ENCODE measurements at regions of chr4 and their contacts with region 1.

Region 1: GRCh38 chr4:8340781-8341241 is 71.3 kb downstream of the HTRA3 start:
- DNase-seq: no peak
- H3K4me3 ChIP-seq: no peak overlapping the region
- H3K27ac ChIP-seq: no peak overlapping the region
- H3K4me1 ChIP-seq: peaks cover 0 to 4% (median 2%) of the 10 kb centered on the region in 4 experiments; a peak in 3 of 7 replicates
- H3K27me3 ChIP-seq: no peaks in the 10 kb centered on the region
- CTCF ChIP-seq: no peak
- EP300 ChIP-seq: no peak
- POLR2A ChIP-seq: no peak
- RAD21 ChIP-seq: no peak

Region 2: DNA sequence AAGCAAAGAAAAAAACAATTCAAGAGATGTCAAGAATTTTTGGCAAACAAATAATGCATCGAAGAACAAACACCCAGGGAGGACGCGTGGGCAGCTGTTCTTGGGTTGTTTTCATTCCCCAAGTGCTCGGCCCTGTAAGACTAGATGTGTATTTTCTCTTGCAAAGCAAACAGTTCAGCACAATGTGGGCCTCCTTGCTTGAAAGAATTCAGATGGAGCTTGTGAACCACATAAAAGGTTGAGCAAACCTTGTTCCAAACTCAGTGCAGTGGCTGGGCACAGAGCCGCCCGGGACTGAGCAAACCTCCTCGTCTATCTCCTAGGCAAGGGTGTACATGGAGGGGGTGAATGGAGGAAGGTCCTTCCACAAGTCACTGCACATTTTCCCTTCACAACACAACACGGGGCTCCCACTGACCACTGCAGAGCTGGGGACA is 11.1 kb after region 1 on chr4:
- CTCF ChIA-PET with region 1: interaction called, 21 read pairs
- POLR2A ChIA-PET with region 1: no interaction called
- DNase-seq: no peak
- H3K4me3 ChIP-seq: no peak overlapping the region
- H3K27ac ChIP-seq: no peak overlapping the region
- H3K4me1 ChIP-seq: peaks cover 6 to 17% (median 11%) of the 10 kb centered on the region in 4 experiments
- H3K27me3 ChIP-seq: peaks cover 0 to 16% (median 1%) of the 10 kb centered on the region in 4 experiments; a peak in 4 of 7 replicates
- CTCF ChIP-seq: no peak
- EP300 ChIP-seq: no peak
- POLR2A ChIP-seq: no peak
- RAD21 ChIP-seq: no peak

Region 3: DNA sequence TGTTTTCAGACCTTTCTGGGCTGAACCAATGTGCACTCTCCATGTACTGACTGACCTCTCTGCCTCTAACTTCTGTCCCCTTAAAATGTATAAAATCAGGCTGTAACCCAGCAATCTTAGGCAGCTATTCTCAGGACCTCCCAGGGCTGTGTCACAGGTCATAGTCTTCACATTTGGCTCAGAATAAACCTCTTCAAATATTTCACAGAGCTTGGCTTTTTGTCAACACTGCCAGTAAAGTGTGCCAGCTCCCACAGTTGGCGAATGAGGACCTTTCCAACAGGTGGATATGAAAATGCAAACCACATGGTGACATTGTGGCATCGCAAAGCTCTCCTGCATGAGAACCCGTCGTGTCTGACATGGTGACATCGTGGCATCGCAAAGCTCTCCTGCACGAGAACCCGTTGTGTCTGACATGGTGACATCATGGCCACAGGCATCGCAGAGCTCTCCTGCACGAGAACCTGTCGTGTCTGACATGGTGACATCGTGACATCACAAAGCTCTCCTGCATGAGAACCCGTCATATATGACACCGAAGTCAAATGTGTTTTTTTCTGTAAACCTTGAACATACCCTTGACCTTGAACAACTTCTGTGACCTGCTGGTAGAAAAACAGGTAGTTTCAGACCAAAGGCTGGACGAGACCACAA is 23.5 kb after region 1 on chr4:
- CTCF ChIA-PET with region 1: interaction called, 15 read pairs
- POLR2A ChIA-PET with region 1: no interaction called
- DNase-seq: no peak
- H3K4me3 ChIP-seq: no peak overlapping the region
- H3K27ac ChIP-seq: no peak overlapping the region
- H3K4me1 ChIP-seq: peaks cover 0 to 3% (median 0%) of the 10 kb centered on the region in 4 experiments; a peak in 2 of 7 replicates
- H3K27me3 ChIP-seq: peaks cover 0 to 6% (median under 1%) of the 10 kb centered on the region in 4 experiments; a peak in 4 of 7 replicates
- CTCF ChIP-seq: no peak
- EP300 ChIP-seq: no peak
- POLR2A ChIP-seq: no peak
- RAD21 ChIP-seq: no peak

Region 4: GRCh38 chr4:8376361-8376760 is 35.5 kb after region 1 on chr4:
- CTCF ChIA-PET with region 1: interaction called, 14 read pairs
- POLR2A ChIA-PET with region 1: no interaction called
- DNase-seq: no peak
- H3K4me3 ChIP-seq: no peak overlapping the region
- H3K27ac ChIP-seq: no peak overlapping the region
- H3K4me1 ChIP-seq: peaks cover 0 to 5% (median 2%) of the 10 kb centered on the region in 4 experiments; a peak in 3 of 7 replicates
- H3K27me3 ChIP-seq: no peaks in the 10 kb centered on the region
- CTCF ChIP-seq: no peak
- EP300 ChIP-seq: no peak
- POLR2A ChIP-seq: no peak
- RAD21 ChIP-seq: no peak

Region 5: GRCh38 chr4:8410641-8411271 is 69.9 kb after region 1 on chr4:
- CTCF ChIA-PET with region 1: interaction called, 10 read pairs
- POLR2A ChIA-PET with region 1: no interaction called
- DNase-seq: peak; percentile 53 to 85
- H3K4me3 ChIP-seq: no peak overlapping the region
- H3K27ac ChIP-seq: no peak overlapping the region
- H3K4me1 ChIP-seq: peaks cover 0 to 5% (median 4%) of the 10 kb centered on the region in 4 experiments; a peak in 6 of 7 replicates
- H3K27me3 ChIP-seq: no peaks in the 10 kb centered on the region
- CTCF ChIP-seq: peak in 2 of 3 experiments; percentile 62 to 73; a peak in 3 of 4 replicates
- EP300 ChIP-seq: no peak
- POLR2A ChIP-seq: no peak
- RAD21 ChIP-seq: peak; percentile 64 to 74

Region 6: DNA sequence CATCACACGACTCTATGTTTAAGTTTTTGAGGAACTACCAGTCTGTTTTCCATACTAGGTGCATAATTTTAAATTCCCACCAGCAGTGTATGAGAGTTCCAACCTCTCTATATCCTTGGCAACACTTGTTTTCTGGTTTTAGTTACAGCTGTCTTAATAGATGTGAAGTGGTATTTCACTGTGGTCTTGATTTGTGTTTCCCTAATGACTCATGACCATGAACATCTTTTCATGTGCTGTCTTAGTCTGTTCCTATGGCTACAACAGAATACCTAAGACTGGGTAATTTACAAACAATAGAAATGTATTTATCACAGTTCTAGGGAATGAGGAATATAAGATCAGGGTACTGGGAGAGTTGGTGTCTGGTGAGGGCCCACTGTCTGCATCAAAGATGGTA is 187.9 kb after region 1 on chr4:
- CTCF ChIA-PET with region 1: no interaction called
- POLR2A ChIA-PET with region 1: no interaction called
- DNase-seq: no peak
- H3K4me3 ChIP-seq: no peak overlapping the region
- H3K27ac ChIP-seq: no peak overlapping the region
- H3K4me1 ChIP-seq: peaks cover under 1 to 11% (median 9%) of the 10 kb centered on the region in 4 experiments
- H3K27me3 ChIP-seq: peaks cover 0 to 2% (median 0%) of the 10 kb centered on the region in 4 experiments; a peak in 1 of 7 replicates
- CTCF ChIP-seq: no peak
- EP300 ChIP-seq: no peak
- POLR2A ChIP-seq: no peak
- RAD21 ChIP-seq: no peak

Region 7: DNA sequence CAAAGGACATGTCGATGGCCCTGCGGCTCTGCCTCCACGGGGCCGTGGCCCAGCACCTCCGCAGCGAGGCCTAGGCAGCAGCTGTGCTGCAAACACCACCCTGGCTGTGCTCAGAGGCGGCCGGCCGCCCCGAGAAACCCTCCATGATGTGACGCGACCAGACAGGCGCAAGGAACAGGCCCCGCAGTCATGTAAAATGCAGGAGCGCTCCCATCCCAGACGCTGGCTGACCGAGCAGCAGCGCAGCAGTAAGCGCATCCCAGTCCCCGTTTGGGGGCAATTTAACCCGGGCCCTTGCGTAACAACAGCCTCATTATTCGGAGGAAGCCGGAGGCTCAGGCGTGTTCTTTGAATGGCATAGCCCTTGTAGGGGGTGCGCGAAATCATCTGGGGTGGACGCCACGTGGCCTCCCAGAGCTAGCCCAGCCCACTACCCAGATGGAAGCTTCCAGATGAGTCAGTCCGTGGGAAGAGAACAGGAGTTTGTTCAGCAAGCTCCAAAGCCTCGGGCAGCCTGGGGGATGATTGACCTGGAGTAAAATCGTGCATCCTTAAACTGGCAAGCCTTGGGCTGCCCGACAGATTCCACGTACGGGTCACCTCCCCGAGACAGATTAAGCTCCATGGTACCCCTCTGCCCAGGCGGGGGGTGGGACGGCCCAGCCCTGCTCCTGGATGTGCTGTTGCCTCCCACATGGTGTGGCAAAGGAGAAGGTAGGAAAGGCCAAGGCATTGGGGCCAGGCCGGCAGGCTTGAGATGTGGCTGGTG is 406.8 kb after region 1 on chr4:
- CTCF ChIA-PET with region 1: no interaction called
- POLR2A ChIA-PET with region 1: no interaction called
- DNase-seq: peak in 1 of 2 experiments; percentile 49
- H3K4me3 ChIP-seq: no peak overlapping the region
- H3K27ac ChIP-seq: no peak overlapping the region
- H3K4me1 ChIP-seq: no peaks in the 10 kb centered on the region; a peak in 1 of 7 replicates
- H3K27me3 ChIP-seq: no peaks in the 10 kb centered on the region
- CTCF ChIP-seq: no peak
- EP300 ChIP-seq: no peak
- POLR2A ChIP-seq: no peak
- RAD21 ChIP-seq: no peak

Measured in H1 (cell line).